ENCODE measurements at regions of chr3 and their contacts with region 1.

Region 1: DNA sequence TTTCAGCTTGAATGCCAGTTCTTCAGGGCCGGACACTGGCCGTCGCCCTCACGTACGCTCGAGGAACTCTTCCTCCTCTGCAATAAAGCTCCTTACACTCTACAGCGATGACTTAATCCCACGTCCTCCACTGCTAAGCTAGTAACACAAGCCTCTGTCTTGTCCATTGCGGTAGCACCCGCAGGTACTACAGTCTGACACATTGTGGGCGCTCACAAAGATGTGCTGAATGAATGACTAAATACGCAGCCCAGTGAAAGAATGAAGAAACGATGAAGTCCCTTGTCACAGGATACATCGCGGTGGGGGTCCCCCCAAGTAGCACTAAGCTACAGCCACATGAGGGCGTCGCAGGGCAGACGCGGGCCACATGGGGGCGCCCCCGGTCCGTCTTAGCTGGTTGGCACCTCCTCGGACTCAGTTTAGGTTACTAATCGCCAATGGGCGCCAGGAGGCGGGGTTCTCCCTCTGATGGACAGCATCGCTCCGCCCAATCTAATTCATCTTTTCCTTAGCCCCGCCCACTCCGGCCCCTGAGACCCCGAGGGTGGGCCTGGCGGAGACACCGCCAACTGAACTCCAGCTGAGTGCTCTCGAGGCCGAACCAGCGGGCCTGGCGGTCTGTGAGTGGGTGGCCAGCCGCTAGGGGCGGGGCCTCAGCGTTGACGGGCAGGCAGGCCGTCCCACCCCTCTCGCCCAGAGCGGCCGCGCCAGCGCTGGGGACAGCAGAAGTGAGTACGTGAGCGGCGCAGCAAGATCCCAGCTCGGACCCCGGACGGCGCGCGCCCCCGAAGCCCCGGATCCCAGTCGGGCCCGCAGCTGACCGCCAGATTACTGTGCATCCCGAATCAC is at the start of gene EPHB3:
- DNase-seq: peak; percentile 79 to 92 (median 84)
- H3K4me3 ChIP-seq: peak within 1 kb of the TSS; percentile 44
- H3K4me3 Mint-ChIP-seq: peak within 1 kb of the TSS; percentile 44 to 80 (median 73)
- H3K27ac ChIP-seq: no peak within 1 kb of the TSS
- H3K27ac Mint-ChIP-seq: peak within 1 kb of the TSS in 5 of 8 donors; percentile 12 to 64 (median 29)
- H3K4me1 ChIP-seq: peaks cover 51% of the 10 kb centered on the region
- H3K4me1 Mint-ChIP-seq: peaks cover 19 to 34% (median 30%) of the 10 kb centered on the region in 3 donors
- H3K27me3 ChIP-seq: peaks cover 24% of the 10 kb centered on the region
- H3K27me3 Mint-ChIP-seq: peaks cover 46 to 72% of the 10 kb centered on the region in 2 donors
- total RNA-seq, gene EPHB3: 0.04 TPM in 1 of 2 experiments, not detected in the other

Region 2: GRCh38 chr3:184636741-184637316 is 75.5 kb after region 1 on chr3:
- CTCF ChIA-PET with region 1: interaction called, 11 read pairs
- POLR2A ChIA-PET with region 1: no interaction called
- DNase-seq: peak in 1 of 5 donors; percentile 7
- H3K4me3 ChIP-seq: no peak overlapping the region
- H3K4me3 Mint-ChIP-seq: peak overlapping the region in 5 of 7 donors; percentile 12 to 64 (median 17)
- H3K27ac ChIP-seq: no peak overlapping the region
- H3K27ac Mint-ChIP-seq: peak overlapping the region in 2 of 8 donors; percentile 15 to 18
- H3K4me1 ChIP-seq: peaks cover 22% of the 10 kb centered on the region
- H3K4me1 Mint-ChIP-seq: peaks cover 4 to 5% (median 4%) of the 10 kb centered on the region in 3 donors
- H3K27me3 ChIP-seq: no peaks in the 10 kb centered on the region
- H3K27me3 Mint-ChIP-seq: peaks cover 4 to 20% of the 10 kb centered on the region in 2 donors

Region 3: DNA sequence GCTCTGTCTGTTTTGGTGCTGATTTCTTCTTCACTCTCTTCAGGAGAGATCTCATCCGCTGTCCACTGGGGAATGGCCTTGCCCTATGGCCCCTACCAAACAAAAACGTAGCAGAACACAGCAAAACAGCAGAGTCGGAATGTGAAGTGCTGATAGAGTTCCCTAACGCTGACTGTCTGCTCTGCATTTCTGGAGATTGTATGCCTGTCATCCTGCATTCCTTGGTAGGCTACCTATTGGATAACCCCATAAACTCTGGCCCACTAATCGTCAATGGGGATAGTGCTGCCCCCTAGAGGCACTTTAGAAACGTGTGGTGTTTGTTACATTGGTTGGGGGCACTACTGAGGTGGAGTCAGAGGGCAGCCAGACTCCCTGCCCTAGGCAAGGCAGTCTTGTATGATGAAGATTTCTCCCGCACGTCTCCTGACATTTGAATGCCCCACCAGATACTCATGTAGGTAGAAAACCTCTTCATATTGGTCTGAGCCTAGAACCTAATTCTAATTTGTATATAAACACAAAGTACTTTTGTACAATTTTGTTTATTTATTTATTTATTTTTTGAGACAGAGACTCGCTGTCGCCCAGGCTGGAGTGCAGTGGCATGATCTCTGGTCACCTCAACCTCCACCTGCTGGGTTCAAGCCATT is 166.2 kb after region 1 on chr3:
- CTCF ChIA-PET with region 1: interaction called, 32 read pairs
- POLR2A ChIA-PET with region 1: no interaction called
- DNase-seq: peak in 3 of 5 donors; percentile 9 to 46 (median 14)
- H3K4me3 ChIP-seq: no peak overlapping the region
- H3K4me3 Mint-ChIP-seq: no peak overlapping the region
- H3K27ac ChIP-seq: no peak overlapping the region
- H3K27ac Mint-ChIP-seq: no peak overlapping the region
- H3K4me1 ChIP-seq: no peaks in the 10 kb centered on the region
- H3K4me1 Mint-ChIP-seq: no peaks in the 10 kb centered on the region
- H3K27me3 ChIP-seq: no peaks in the 10 kb centered on the region
- H3K27me3 Mint-ChIP-seq: peaks cover 13 to 47% of the 10 kb centered on the region in 2 donors

Region 4: GRCh38 chr3:184769382-184770170 is 208.3 kb after region 1 on chr3:
- CTCF ChIA-PET with region 1: interaction called, 15 read pairs
- POLR2A ChIA-PET with region 1: no interaction called
- DNase-seq: peak in 1 of 5 donors; percentile 29
- H3K4me3 ChIP-seq: no peak overlapping the region
- H3K4me3 Mint-ChIP-seq: no peak overlapping the region
- H3K27ac ChIP-seq: no peak overlapping the region
- H3K27ac Mint-ChIP-seq: no peak overlapping the region
- H3K4me1 ChIP-seq: no peaks in the 10 kb centered on the region
- H3K4me1 Mint-ChIP-seq: no peaks in the 10 kb centered on the region
- H3K27me3 ChIP-seq: no peaks in the 10 kb centered on the region
- H3K27me3 Mint-ChIP-seq: peaks cover 13 to 36% of the 10 kb centered on the region in 2 donors